Naive thymus-derived CD4-positive, alpha-beta T cell (primary cell): ENCODE measurements at regions of chr4 and their contacts with region 1.

Region 1: DNA sequence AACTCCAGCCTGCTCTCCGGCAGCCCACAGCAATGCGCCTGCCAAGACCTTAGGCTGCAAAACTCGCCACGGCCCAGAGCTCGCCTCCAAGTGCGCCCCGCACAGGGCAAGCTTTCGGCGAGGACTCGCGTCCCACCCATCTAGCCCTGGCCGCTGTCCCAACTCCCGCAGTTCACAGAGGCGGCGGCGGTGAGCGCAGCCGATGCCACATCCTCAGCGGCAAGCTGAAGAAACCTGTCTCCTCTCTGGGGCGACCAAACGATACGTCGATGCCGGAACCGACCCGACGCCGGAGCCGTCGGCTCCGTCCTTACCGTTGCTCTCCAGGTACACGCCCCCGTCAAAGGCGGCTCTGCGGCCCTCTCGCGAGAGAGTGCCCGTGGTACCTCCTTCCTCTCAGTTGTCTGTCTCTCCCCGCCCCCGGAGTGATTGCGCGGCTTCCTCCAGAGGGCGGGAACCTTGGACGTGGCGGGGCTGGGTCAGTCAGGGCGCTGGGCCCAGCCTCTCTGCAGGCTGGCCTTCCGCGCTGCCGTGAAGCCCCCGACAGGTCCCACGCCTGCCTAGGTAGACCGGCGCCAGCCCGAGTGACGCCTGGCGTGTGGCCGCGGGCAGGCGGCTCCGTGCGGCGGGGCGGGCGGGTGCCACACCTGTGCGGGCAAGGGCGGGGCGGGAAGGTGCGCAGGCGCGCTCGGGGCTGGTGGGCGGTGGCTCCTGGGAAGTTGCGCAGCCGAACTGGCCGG is 380 bp upstream of the RAB33B start:
- DNase-seq: peak; percentile 96 to 98 (median 98)
- ATAC-seq: peak; percentile 93
- H3K4me3 ChIP-seq: peak overlapping the region; percentile 97
- H3K4me3 Mint-ChIP-seq: peak overlapping the region; percentile 94 to 99 (median 97)
- H3K27ac ChIP-seq: peak overlapping the region; percentile 97
- H3K27ac Mint-ChIP-seq: peak overlapping the region; percentile 96 to 100 (median 99)
- H3K4me1 ChIP-seq: peaks cover 30 to 36% of the 10 kb centered on the region in 2 donors
- H3K4me1 Mint-ChIP-seq: peaks cover 38 to 82% (median 62%) of the 10 kb centered on the region in 7 donors
- H3K27me3 ChIP-seq: no peaks in the 10 kb centered on the region
- H3K27me3 Mint-ChIP-seq: no peaks in the 10 kb centered on the region

Region 2: GRCh38 chr4:139015269-139015947 is 438.1 kb before region 1 on chr4 and contains the start of gene NOCT:
- CTCF ChIA-PET with region 1: no interaction called
- POLR2A ChIA-PET with region 1: interaction called, 6 read pairs
- intact Hi-C with region 1: loop called (anchors 1 kb)
- DNase-seq: peak; percentile 82 to 92 (median 89)
- ATAC-seq: peak; percentile 94
- H3K4me3 ChIP-seq: peak within 1 kb of the TSS; percentile 65
- H3K4me3 Mint-ChIP-seq: peak within 1 kb of the TSS; percentile 82 to 93 (median 88)
- H3K27ac ChIP-seq: peak within 1 kb of the TSS; percentile 91
- H3K27ac Mint-ChIP-seq: peak within 1 kb of the TSS; percentile 76 to 99 (median 94)
- H3K4me1 ChIP-seq: peaks cover 7 to 10% of the 10 kb centered on the region in 2 donors
- H3K4me1 Mint-ChIP-seq: peaks cover 14 to 44% (median 24%) of the 10 kb centered on the region in 7 donors
- H3K27me3 ChIP-seq: no peaks in the 10 kb centered on the region
- H3K27me3 Mint-ChIP-seq: no peaks in the 10 kb centered on the region
- total RNA-seq, gene NOCT: 1.6 to 33.7 (median 8.8) TPM

Region 3: GRCh38 chr4:139177868-139178611 is 275.5 kb before region 1 on chr4:
- CTCF ChIA-PET with region 1: no interaction called
- POLR2A ChIA-PET with region 1: interaction called, 6 read pairs
- intact Hi-C with region 1: loop called (anchors 1 kb)
- DNase-seq: peak; percentile 84 to 98 (median 92)
- ATAC-seq: peak; percentile 84
- H3K4me3 ChIP-seq: peak overlapping the region; percentile 71
- H3K4me3 Mint-ChIP-seq: peak overlapping the region; percentile 86 to 95 (median 91)
- H3K27ac ChIP-seq: peak overlapping the region; percentile 86
- H3K27ac Mint-ChIP-seq: peak overlapping the region; percentile 90 to 97 (median 94)
- H3K4me1 ChIP-seq: peaks cover 0 to 11% of the 10 kb centered on the region in 2 donors
- H3K4me1 Mint-ChIP-seq: peaks cover 0 to 31% (median 17%) of the 10 kb centered on the region in 7 donors
- H3K27me3 ChIP-seq: no peaks in the 10 kb centered on the region
- H3K27me3 Mint-ChIP-seq: peaks cover 0 to 44% (median 0%) of the 10 kb centered on the region in 5 donors

Region 4: DNA sequence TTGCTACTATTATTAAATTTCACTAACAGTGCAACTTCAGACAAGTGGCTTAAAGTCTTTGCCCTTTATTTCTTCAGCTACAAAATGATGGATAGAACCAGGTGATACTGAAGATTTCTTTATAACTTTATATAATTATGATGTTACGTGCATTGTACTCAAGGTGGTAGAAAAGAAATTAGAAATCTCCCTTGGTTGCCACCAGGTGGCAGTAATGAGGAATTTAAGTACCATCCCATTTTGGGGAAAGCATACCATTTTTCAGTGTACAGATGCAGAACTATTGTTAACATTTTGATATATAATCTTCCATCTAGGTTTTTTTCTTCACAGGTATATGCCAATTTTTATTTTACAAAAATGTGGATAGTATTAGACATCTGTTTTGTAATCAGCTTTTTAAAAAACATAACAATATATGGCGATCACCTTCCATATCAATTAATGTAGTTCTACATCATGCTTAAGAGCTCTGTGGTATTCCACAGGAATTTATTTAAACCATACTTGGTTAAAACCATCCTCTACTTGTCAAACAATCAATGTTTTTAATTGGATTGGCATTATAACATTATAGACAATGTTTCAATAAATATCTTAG is 37.4 kb before region 1 on chr4:
- CTCF ChIA-PET with region 1: interaction called, 12 read pairs
- POLR2A ChIA-PET with region 1: interaction called, 3 read pairs
- intact Hi-C with region 1: loop called (anchors 1 kb)
- DNase-seq: peak in 6 of 9 donors; percentile 5 to 46 (median 43)
- ATAC-seq: peak; percentile 72
- H3K4me3 ChIP-seq: no peak overlapping the region
- H3K4me3 Mint-ChIP-seq: no peak overlapping the region
- H3K27ac ChIP-seq: no peak overlapping the region
- H3K27ac Mint-ChIP-seq: no peak overlapping the region
- H3K4me1 ChIP-seq: no peaks in the 10 kb centered on the region
- H3K4me1 Mint-ChIP-seq: peaks cover 0 to 19% (median 12%) of the 10 kb centered on the region in 7 donors
- H3K27me3 ChIP-seq: no peaks in the 10 kb centered on the region
- H3K27me3 Mint-ChIP-seq: no peaks in the 10 kb centered on the region

Region 5: DNA sequence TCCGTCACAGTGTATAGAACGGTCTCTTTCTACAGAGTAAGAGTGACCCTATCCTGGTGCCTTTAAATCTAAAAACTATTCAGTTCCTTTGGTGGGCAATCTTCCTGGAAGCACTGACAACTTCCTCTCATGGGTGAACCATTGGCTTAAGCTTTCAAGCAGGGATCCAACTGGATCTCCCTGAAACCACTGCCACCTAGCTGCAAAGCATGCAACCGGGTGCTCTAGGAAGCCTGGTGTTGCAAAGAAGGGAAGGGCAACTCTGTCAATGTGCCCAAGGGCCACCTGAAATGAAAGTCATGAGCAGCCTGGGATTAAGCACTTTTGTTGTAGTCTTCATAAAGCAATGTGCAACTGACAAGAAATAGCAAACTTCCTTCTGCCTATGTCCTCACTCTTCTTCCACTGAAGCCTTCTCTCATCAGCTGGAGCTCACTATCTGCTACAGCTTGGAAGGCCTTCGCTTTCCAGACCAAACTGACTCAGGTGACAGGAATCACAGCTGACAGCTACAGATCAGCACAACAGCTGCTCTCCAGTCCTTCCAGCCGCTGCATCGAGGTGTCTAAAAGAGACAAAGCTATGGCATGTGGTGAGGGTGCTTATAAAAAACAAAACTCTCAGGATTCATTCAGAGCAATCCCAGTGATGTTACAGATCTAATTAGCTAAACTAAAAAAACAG is 56.3 kb after region 1 on chr4:
- CTCF ChIA-PET with region 1: no interaction called
- POLR2A ChIA-PET with region 1: no interaction called
- intact Hi-C with region 1: loop called in 1 of 2 experiments (anchors 2 kb)
- DNase-seq: peak in 1 of 9 donors; percentile 10
- ATAC-seq: no peak
- H3K4me3 ChIP-seq: no peak overlapping the region
- H3K4me3 Mint-ChIP-seq: no peak overlapping the region
- H3K27ac ChIP-seq: no peak overlapping the region
- H3K27ac Mint-ChIP-seq: peak overlapping the region in 1 of 9 donors; percentile 45
- H3K4me1 ChIP-seq: no peaks in the 10 kb centered on the region
- H3K4me1 Mint-ChIP-seq: peaks cover 0 to 2% (median 0%) of the 10 kb centered on the region in 7 donors
- H3K27me3 ChIP-seq: no peaks in the 10 kb centered on the region
- H3K27me3 Mint-ChIP-seq: no peaks in the 10 kb centered on the region

Region 6: DNA sequence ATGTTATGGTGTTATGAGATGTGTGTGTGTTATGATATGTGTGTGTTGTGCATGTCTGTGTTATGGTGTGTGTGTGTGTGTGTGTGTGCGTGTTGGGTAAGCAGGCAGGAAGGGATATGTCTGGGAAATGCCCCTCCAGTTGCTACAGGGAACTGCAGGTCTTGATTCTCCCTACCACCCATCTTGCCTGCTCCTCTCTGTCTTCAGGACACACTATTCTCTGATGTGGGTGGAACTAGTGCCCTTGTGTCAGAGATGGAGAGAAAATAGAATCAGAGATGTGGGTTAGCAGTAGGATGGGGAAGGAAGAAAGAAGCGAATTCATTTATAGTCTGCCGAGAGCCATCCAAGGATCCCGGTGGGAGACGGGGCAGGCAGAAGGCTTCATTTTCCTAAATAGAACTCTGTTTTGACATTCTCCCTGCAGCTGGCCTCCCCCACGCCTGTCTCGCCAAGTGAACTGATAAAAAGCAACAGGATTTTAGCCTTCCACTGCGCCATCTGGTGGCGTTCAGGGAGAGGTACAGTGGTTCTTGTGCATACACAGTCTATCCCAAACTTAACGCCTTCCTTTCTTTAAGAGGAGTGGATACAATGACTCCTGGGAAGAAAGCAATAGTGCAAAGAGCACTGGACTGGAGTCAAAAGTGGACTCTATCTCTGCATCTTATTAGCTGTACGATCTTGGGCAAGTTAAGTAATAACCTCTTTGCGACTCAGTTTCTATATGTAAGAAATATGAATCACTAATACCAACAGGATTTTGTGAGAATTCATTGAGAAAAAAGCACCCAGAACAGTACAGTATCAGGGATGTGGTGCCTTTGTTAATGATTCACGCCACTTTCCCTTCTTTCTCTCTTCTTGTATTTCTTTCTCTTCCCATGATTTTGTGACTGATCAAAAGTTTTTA is 198.0 kb after region 1 on chr4:
- CTCF ChIA-PET with region 1: interaction called, 4 read pairs
- POLR2A ChIA-PET with region 1: no interaction called
- intact Hi-C with region 1: loop called (anchors 1 to 2 kb)
- DNase-seq: peak; percentile 32 to 69 (median 57)
- ATAC-seq: peak; percentile 91
- H3K4me3 ChIP-seq: no peak overlapping the region
- H3K4me3 Mint-ChIP-seq: peak overlapping the region in 6 of 10 donors; percentile 0 to 46 (median 26)
- H3K27ac ChIP-seq: no peak overlapping the region
- H3K27ac Mint-ChIP-seq: peak overlapping the region in 1 of 9 donors; percentile 56
- H3K4me1 ChIP-seq: no peaks in the 10 kb centered on the region
- H3K4me1 Mint-ChIP-seq: peaks cover 0 to 13% (median 5%) of the 10 kb centered on the region in 7 donors
- H3K27me3 ChIP-seq: no peaks in the 10 kb centered on the region
- H3K27me3 Mint-ChIP-seq: peaks cover 0 to 9% (median 5%) of the 10 kb centered on the region in 5 donors

Region 7: GRCh38 chr4:140373328-140374129 is 920.0 kb after region 1 on chr4 and contains the start of gene SCOC:
- CTCF ChIA-PET with region 1: no interaction called
- POLR2A ChIA-PET with region 1: no interaction called
- intact Hi-C with region 1: loop called (anchors 1 kb)
- DNase-seq: peak; percentile 80 to 98 (median 95)
- ATAC-seq: peak; percentile 98
- H3K4me3 ChIP-seq: peak within 1 kb of the TSS; percentile 79
- H3K4me3 Mint-ChIP-seq: peak within 1 kb of the TSS in 2 of 10 donors; percentile 87 to 90
- H3K27ac ChIP-seq: peak within 1 kb of the TSS; percentile 86
- H3K27ac Mint-ChIP-seq: peak within 1 kb of the TSS in 5 of 9 donors; percentile 47 to 90 (median 51)
- H3K4me1 ChIP-seq: peaks cover 6 to 7% of the 10 kb centered on the region in 2 donors
- H3K4me1 Mint-ChIP-seq: peaks cover 29 to 49% (median 43%) of the 10 kb centered on the region in 7 donors
- H3K27me3 ChIP-seq: no peaks in the 10 kb centered on the region
- H3K27me3 Mint-ChIP-seq: peaks cover 0 to 17% (median 0%) of the 10 kb centered on the region in 5 donors
- total RNA-seq, gene SCOC: 9.3 to 26.3 (median 22.6) TPM